HAP-1 (cell line): ENCODE measurements at regions of chr3 and their contacts with region 1.

Region 1: GRCh38 chr3:113912552-113913236 is 35.1 kb upstream of the ZDHHC23 start:
- DNase-seq: peak; percentile 50 to 72
- H3K4me3 ChIP-seq: no peak overlapping the region
- H3K4me1 ChIP-seq: no peaks in the 10 kb centered on the region
- H3K27me3 ChIP-seq: no peaks in the 10 kb centered on the region

Region 2: GRCh38 chr3:112811131-112811884 is 1101.4 kb before region 1 on chr3:
- in situ Hi-C with region 1: no loop called
- DNase-seq: no peak
- H3K4me3 ChIP-seq: no peak overlapping the region
- H3K4me1 ChIP-seq: no peaks in the 10 kb centered on the region
- H3K27me3 ChIP-seq: peaks cover 6% of the 10 kb centered on the region; the same call in 1 of the 2 replicates

Region 3: GRCh38 chr3:113353678-113354077 is 559.0 kb before region 1 on chr3:
- in situ Hi-C with region 1: no loop called
- DNase-seq: no peak
- H3K4me3 ChIP-seq: no peak overlapping the region
- H3K4me1 ChIP-seq: no peaks in the 10 kb centered on the region; the same call in 1 of the 2 replicates
- H3K27me3 ChIP-seq: no peaks in the 10 kb centered on the region

Region 4: DNA sequence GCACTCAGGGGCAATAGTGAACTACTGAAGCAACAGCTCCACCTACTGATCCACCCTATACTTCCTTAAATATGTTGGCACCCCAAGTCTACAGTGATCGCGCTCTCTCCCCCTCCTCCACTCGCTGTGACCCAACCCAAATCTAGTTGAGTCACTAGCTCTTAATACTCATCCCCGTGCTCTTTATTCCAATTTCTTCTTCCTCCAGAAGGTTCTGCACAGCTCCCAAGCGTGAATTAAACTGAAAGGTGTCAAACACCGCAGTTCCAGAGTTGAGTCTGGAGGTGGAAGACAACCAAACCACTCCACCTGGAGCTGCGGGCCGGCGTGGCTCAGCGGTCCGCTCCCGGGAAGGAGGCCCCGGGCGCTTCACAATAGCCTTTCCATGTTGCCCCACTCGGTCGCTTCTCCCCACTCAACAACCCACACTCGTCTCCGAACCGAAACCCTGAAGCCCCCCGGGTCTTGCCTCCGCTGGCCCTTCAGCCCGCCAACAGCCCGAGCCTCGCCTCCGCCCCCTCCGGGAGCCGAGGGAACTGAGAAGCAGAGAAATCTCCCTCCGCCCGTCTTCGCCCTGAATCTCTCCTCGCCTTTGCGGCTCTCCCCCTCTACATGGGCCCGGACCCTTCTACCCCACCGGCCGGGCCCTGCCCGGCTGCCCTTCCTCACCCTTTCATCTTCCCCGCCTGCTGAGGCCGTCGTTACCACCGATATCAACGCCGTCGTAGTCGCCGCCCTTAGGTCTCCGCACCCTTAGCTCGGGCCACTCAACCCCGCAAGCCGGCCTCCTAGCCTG is 167.2 kb before region 1 on chr3:
- in situ Hi-C with region 1: loop called (anchors 25 kb)
- DNase-seq: peak; percentile 79 to 91
- H3K4me3 ChIP-seq: peak overlapping the region; percentile 84
- H3K4me1 ChIP-seq: peaks cover 44% of the 10 kb centered on the region
- H3K27me3 ChIP-seq: no peaks in the 10 kb centered on the region

Region 5: GRCh38 chr3:113844622-113845222 is 68.0 kb before region 1 on chr3:
- in situ Hi-C with region 1: loop called (anchors 5 kb)
- DNase-seq: peak in 1 of 2 experiments; percentile 68
- H3K4me3 ChIP-seq: no peak overlapping the region
- H3K4me1 ChIP-seq: no peaks in the 10 kb centered on the region
- H3K27me3 ChIP-seq: no peaks in the 10 kb centered on the region

Region 6: DNA sequence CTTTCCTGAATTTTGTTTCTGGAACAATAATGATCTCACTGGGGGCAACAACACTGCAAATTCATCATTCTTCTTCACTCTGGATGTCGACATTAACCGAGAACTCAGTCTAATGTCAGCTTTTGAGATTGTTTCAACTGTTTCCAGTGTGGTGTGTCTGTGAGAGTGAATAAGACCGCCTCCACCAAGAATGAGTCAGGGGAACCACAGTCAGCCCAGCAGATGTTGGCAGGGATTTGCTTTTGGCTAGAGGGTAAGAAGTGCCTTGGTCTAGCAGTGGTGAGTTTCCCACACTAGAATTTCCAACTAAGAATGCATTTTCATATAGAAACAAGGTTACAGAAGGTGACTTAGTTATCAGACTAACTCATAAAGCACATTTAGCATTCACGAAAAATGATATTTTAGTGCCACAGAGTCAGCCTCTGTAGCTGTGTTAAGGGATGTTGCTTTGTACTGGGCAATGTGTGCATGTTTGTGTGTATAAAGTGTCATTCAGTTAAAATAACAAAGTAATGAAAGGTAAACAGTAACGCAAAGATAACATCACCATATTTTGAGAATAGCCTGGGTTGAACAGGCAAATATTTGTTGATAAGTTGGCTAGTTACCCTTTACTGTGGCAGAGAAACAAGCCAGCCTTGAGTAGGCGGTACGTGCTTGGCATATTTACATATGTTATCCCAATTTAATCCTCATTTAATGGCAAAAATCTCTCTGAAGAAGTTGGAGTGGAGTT is 232.4 kb after region 1 on chr3:
- in situ Hi-C with region 1: no loop called
- DNase-seq: no peak
- H3K4me3 ChIP-seq: no peak overlapping the region
- H3K4me1 ChIP-seq: no peaks in the 10 kb centered on the region
- H3K27me3 ChIP-seq: no peaks in the 10 kb centered on the region